Transverse colon (tissue), 4 donors: ENCODE measurements at regions of chrX and their contacts with region 1.

Region 1: GRCh38 chrX:66328950-66329596 is 165.0 kb downstream of the HEPH start:
- DNase-seq: no peak
- H3K4me3 ChIP-seq: no peak overlapping the region
- H3K27ac ChIP-seq: no peak overlapping the region
- H3K4me1 ChIP-seq: no peaks in the 10 kb centered on the region
- H3K27me3 ChIP-seq: no peaks in the 10 kb centered on the region
- CTCF ChIP-seq: no peak
- EP300 ChIP-seq: no peak
- POLR2A ChIP-seq: no peak

Region 2: DNA sequence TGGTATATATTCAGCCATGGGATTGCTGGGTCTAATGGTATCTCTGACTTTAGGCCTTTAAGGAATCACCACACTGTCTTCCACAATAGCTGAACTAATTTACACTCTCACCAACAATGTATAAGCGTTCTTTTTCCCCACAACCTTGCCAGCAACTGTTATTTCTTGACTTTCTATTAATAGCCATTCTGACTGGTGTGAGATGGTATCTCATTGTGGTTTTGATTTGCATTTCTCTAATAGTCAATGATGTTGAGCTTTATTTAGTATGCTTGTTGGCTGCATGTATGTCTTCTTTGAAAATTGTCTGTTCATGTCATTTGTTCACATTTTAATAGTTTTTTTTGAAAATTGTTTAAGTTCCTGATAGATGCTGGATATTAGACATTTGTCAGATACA is 70.2 kb after region 1 on chrX:
- in situ Hi-C with region 1: no loop called
- intact Hi-C with region 1: loop called (anchors 10 kb)
- DNase-seq: no peak
- H3K4me3 ChIP-seq: no peak overlapping the region
- H3K27ac ChIP-seq: no peak overlapping the region
- H3K4me1 ChIP-seq: no peaks in the 10 kb centered on the region
- H3K27me3 ChIP-seq: no peaks in the 10 kb centered on the region
- CTCF ChIP-seq: no peak
- EP300 ChIP-seq: no peak
- POLR2A ChIP-seq: no peak

Region 3: GRCh38 chrX:66437719-66438118 is 108.6 kb after region 1 on chrX:
- in situ Hi-C with region 1: no loop called
- intact Hi-C with region 1: no loop called
- DNase-seq: no peak
- H3K4me3 ChIP-seq: no peak overlapping the region
- H3K27ac ChIP-seq: no peak overlapping the region
- H3K4me1 ChIP-seq: no peaks in the 10 kb centered on the region
- H3K27me3 ChIP-seq: no peaks in the 10 kb centered on the region
- CTCF ChIP-seq: no peak
- EP300 ChIP-seq: no peak
- POLR2A ChIP-seq: no peak